Natural killer cell (primary cell): ENCODE measurements at regions of chr7 and their contacts with region 1.

Region 1: DNA sequence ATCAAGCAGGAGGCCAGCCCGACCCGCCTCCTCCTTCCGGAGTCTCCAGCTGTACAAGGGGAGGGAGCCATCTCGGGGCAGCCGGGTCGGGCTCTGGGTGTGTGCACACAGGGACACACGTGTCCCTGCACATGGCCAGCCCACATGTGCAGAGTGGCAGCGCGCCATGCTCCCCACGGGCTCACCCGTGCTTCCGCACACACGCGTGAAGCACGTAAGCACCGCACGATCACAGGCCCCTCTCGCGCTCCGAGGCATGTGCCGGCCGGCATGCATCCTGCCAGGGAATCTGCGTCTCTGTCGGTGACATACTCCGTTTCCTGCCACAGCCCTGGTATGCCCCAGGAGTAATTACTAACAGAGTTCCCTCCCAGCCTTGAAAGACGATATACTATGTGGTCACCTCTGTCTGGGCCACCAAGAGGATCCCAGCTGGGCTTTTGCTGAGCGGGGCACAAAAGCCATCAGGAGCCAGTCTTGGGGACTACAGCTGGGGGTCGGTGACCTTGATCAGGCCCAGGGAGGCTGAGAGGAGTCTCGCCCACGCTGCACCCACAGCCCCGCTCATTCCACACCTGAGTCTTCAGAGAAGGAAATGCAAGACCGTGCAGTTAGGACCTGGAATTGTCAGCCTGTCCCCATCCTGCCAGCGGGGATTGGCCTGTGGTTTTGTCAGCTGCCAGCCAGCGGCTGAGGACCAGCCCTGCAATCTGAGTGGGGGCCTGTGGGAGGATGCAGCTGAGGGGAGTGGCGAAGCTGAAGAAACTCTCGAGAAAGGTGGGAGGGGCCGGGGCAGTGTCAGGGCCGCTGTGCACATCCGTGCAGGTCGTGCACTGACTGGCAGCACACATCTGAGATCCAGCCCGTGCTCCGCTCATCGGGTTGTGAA is 11.0 kb upstream of the LFNG start:
- DNase-seq: peak; percentile 72 to 94
- ATAC-seq: peak; percentile 49 to 68 (median 61)
- H3K4me3 ChIP-seq: peak overlapping the region; percentile 12
- H3K4me3 Mint-ChIP-seq: peak overlapping the region; percentile 76
- H3K27ac ChIP-seq: peak overlapping the region; percentile 90
- H3K27ac Mint-ChIP-seq: peak overlapping the region in 1 of 2 donors; percentile 95
- H3K4me1 ChIP-seq: peaks cover 64% of the 10 kb centered on the region
- H3K4me1 Mint-ChIP-seq: peaks cover 37 to 61% of the 10 kb centered on the region in 2 donors
- H3K27me3 ChIP-seq: no peaks in the 10 kb centered on the region
- H3K27me3 Mint-ChIP-seq: no peaks in the 10 kb centered on the region
- CTCF ChIP-seq: no peak

Region 2: GRCh38 chr7:2138146-2138765 is 370.3 kb before region 1 on chr7:
- intact Hi-C with region 1: no loop called
- DNase-seq: peak; percentile 31 to 77
- ATAC-seq: peak in 2 of 3 donors; percentile 72 to 79
- H3K4me3 ChIP-seq: peak overlapping the region; percentile 29
- H3K4me3 Mint-ChIP-seq: peak overlapping the region; percentile 52
- H3K27ac ChIP-seq: no peak overlapping the region
- H3K27ac Mint-ChIP-seq: no peak overlapping the region
- H3K4me1 ChIP-seq: peaks cover 12% of the 10 kb centered on the region
- H3K4me1 Mint-ChIP-seq: peaks cover 13 to 14% of the 10 kb centered on the region in 2 donors
- H3K27me3 ChIP-seq: no peaks in the 10 kb centered on the region
- H3K27me3 Mint-ChIP-seq: no peaks in the 10 kb centered on the region
- CTCF ChIP-seq: no peak

Region 3: GRCh38 chr7:2417981-2418481 is 90.5 kb before region 1 on chr7:
- intact Hi-C with region 1: loop called (anchors 5 kb)
- DNase-seq: peak; percentile 80 to 86
- ATAC-seq: peak; percentile 69 to 89 (median 85)
- H3K4me3 ChIP-seq: no peak overlapping the region
- H3K4me3 Mint-ChIP-seq: peak overlapping the region; percentile 86
- H3K27ac ChIP-seq: peak overlapping the region; percentile 80
- H3K27ac Mint-ChIP-seq: peak overlapping the region; percentile 63 to 93
- H3K4me1 ChIP-seq: peaks cover 91% of the 10 kb centered on the region
- H3K4me1 Mint-ChIP-seq: peaks cover 60 to 63% of the 10 kb centered on the region in 2 donors
- H3K27me3 ChIP-seq: no peaks in the 10 kb centered on the region
- H3K27me3 Mint-ChIP-seq: no peaks in the 10 kb centered on the region
- CTCF ChIP-seq: no peak

Region 4: GRCh38 chr7:2471396-2471795 is 37.2 kb before region 1 on chr7:
- intact Hi-C with region 1: no loop called
- DNase-seq: no peak
- ATAC-seq: no peak
- H3K4me3 ChIP-seq: no peak overlapping the region
- H3K4me3 Mint-ChIP-seq: no peak overlapping the region
- H3K27ac ChIP-seq: no peak overlapping the region
- H3K27ac Mint-ChIP-seq: no peak overlapping the region
- H3K4me1 ChIP-seq: peaks cover 8% of the 10 kb centered on the region
- H3K4me1 Mint-ChIP-seq: peaks cover 5 to 6% of the 10 kb centered on the region in 2 donors
- H3K27me3 ChIP-seq: no peaks in the 10 kb centered on the region
- H3K27me3 Mint-ChIP-seq: peaks cover 7 to 11% of the 10 kb centered on the region in 2 donors
- CTCF ChIP-seq: no peak

Region 5: DNA sequence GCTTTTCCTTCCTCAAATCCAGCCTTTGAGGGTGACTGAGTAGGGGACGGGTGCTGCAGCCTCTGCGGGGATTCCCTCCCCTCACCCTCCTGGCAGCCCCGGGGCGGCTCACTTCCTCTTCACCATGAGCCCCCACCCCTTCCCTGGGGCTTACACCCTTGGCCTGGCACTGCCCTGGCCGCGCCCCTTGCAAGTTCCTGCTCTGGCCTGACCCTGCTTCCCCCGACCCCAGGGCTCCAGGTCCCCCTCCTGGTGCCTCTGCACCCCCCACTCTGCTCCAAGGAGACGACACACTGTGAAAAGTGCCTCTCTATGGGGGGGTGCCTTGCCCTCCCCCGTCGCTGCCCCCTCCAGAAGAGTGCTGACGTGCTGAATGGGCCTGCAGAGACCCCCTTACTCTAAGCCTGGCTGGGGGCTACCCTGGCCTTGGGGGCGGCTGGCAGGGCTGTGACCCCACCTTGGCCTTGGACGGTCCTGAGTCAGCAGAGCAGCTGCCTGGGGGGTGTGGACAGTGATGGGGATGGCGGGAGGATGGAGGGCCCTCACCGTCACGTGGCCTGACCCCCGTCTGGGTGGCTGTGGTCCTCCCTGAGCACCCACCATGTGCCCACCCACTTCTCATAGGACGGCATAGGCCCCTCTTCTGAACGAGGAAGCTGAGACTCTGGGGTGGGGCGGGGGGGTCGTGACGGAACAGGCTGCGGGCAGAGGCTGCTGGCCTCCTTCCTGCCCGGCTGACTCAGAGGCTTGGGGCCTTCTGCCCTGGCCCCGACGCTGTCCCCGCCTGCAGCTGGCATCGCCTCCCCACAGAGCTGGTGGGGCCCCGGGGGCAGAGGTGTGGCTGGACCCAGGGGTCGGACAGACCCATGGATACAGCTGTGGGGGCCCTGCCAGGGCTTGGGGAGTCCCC is 20.8 kb after region 1 on chr7:
- intact Hi-C with region 1: loop called (anchors 1 kb)
- DNase-seq: peak; percentile 71 to 83
- ATAC-seq: peak; percentile 55 to 75 (median 59)
- H3K4me3 ChIP-seq: peak overlapping the region; percentile 10
- H3K4me3 Mint-ChIP-seq: peak overlapping the region; percentile 82
- H3K27ac ChIP-seq: peak overlapping the region; percentile 94
- H3K27ac Mint-ChIP-seq: peak overlapping the region; percentile 90 to 97
- H3K4me1 ChIP-seq: peaks cover 72% of the 10 kb centered on the region
- H3K4me1 Mint-ChIP-seq: peaks cover 26 to 51% of the 10 kb centered on the region in 2 donors
- H3K27me3 ChIP-seq: no peaks in the 10 kb centered on the region
- H3K27me3 Mint-ChIP-seq: no peaks in the 10 kb centered on the region
- CTCF ChIP-seq: no peak